Activated naive CD4-positive, alpha-beta T cell treated with anti-CD3 and anti-CD28 coated beads for 36 hours (primary cell): ENCODE measurements at regions of chr2 and their contacts with region 1.

Region 1: DNA sequence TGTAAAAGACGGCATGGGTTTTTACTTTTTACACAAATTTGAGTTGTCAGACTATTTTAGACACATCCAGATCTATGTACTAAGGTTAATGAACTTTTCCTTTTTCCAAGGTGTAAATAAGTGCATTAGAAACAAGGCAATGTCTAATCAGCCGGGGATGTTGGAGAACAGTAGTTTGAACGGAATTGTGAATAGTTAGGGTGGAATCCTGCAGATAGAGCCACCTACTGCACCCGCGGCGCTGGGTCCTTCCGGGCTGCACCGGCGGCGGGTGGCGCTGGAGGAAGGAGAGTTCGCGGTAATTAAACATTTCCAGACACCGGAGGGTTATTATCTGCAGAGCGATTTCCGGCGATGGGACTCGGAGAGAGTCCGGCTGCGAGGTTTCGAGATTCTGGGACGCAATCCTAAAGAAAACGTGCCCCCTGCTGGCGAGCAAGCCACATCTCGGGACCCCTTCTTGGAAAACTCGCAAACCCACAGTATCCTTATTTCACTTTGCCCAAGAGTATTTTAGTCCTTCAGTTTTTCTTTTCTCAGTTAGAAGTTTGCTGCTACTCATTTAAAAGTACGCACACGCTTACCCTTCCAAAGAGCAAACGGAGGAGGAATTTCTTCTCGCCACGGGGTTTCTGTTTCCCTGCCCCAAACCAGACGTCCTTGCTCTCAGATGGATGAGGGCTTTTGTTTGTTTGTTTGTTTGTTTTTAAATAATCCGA is 4.5 kb upstream of the OSR1 start:
- DNase-seq: peak; percentile 70
- H3K4me3 Mint-ChIP-seq: peak overlapping the region; percentile 92
- H3K27ac Mint-ChIP-seq: no peak overlapping the region
- H3K4me1 Mint-ChIP-seq: peaks cover 28% of the 10 kb centered on the region
- H3K27me3 Mint-ChIP-seq: peaks cover 56% of the 10 kb centered on the region

Region 2: DNA sequence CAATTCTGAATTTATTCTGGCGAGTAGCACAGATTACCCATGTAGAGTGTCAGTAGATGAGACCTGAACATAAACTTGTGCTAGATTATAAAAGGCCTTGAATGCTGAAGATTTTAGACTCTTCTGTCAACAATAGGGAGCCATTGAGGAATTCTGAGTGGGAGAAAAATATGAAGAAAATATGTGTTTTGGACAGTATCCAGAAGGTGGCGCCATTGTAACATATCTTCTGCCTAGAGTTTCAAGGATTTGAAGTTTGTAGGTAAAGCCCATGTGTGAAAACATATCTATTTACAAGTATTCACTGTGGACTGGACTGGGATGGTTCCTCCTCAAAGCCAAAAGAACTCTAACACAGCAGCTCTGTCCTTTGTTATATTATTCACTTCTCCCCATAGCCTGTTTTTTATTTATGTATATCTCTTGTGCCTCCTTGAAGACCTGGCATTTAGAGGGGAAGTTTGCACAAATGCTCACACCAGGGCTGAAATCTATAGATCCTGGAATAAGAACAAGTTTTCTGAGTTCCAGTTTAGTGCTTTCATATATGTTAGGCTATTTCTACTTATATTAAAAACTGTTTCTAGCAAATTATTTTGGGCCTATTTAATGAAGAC is 927.4 kb before region 1 on chr2:
- CTCF ChIA-PET with region 1: no interaction called
- intact Hi-C with region 1: loop called (anchors 2 kb)
- DNase-seq: peak; percentile 38
- H3K4me3 Mint-ChIP-seq: no peak overlapping the region
- H3K27ac Mint-ChIP-seq: no peak overlapping the region
- H3K4me1 Mint-ChIP-seq: no peaks in the 10 kb centered on the region
- H3K27me3 Mint-ChIP-seq: peaks cover 10% of the 10 kb centered on the region

Region 3: GRCh38 chr2:18560031-18560796 is 802.7 kb before region 1 on chr2 and contains the start of gene RDH14:
- CTCF ChIA-PET with region 1: no interaction called
- intact Hi-C with region 1: loop called (anchors 5 kb)
- DNase-seq: peak; percentile 94
- H3K4me3 Mint-ChIP-seq: peak within 1 kb of the TSS; percentile 84
- H3K27ac Mint-ChIP-seq: peak within 1 kb of the TSS; percentile 89
- H3K4me1 Mint-ChIP-seq: peaks cover 35% of the 10 kb centered on the region
- H3K27me3 Mint-ChIP-seq: no peaks in the 10 kb centered on the region
- total RNA-seq, gene RDH14: 11.4 to 11.6 TPM

Region 4: DNA sequence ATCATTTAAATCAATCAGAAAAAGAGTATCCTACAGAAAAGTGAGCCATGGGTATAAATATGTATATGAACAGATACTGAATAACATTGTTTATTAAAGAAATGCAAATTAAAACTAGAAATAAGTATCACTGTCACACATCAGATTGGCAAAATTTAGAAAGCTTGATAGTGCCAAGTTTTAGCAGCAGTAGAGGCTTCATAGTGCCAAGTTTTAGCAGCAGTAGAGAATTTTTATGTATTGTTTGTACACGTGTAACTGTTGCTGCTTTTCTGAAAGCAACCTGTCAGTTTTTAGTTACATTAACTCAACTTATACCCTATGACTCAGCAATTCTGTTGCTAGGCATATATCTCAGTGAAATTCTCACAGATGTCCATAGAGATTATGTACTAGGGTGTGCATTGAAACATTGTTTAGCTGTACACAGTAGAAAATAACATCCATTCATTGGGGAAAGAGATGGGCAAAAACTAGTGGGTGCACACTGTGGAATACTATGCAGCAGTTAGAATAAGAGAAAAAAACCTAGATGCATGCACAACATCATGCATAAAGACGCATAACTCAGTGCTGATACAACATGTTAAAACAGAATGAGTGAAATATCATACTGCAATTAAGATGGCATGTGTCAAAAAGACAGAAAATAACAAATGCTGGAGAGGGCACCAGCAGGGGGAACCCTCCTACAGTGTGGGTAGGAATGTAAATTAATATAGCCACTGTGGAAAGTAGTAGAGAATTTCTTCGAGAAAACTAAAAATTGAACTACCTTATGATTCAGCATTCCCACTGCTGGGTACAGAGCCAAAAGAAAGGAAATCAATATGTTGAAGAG is 479.1 kb before region 1 on chr2:
- CTCF ChIA-PET with region 1: no interaction called
- intact Hi-C with region 1: loop called (anchors 2 kb)
- DNase-seq: peak; percentile 22
- H3K4me3 Mint-ChIP-seq: no peak overlapping the region
- H3K27ac Mint-ChIP-seq: no peak overlapping the region
- H3K4me1 Mint-ChIP-seq: no peaks in the 10 kb centered on the region
- H3K27me3 Mint-ChIP-seq: no peaks in the 10 kb centered on the region

Region 5: DNA sequence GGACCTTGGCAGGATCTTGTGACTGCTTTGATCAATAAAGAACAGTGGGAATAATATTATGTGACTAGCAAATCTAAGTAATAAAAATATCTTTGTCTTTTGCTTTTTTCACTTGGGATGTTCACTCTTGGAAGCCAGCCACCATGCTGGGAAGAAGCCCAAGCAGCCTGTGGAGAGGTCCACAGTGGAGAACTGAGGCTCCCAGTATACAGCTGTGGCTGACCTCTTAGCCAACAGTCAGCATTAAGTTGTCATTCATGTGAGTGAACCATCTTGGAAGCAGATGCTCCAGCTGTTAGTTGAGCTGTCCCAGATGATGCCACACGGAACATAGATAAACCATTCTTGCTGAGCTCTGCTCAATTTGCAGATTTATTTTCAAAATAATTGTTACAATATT is 164.5 kb before region 1 on chr2:
- CTCF ChIA-PET with region 1: no interaction called
- intact Hi-C with region 1: no loop called
- DNase-seq: no peak
- H3K4me3 Mint-ChIP-seq: no peak overlapping the region
- H3K27ac Mint-ChIP-seq: no peak overlapping the region
- H3K4me1 Mint-ChIP-seq: no peaks in the 10 kb centered on the region
- H3K27me3 Mint-ChIP-seq: peaks cover 2% of the 10 kb centered on the region

Region 6: GRCh38 chr2:19488009-19488691 is 125.2 kb after region 1 on chr2:
- CTCF ChIA-PET with region 1: no interaction called
- intact Hi-C with region 1: loop called (anchors 5 kb)
- DNase-seq: peak; percentile 49
- H3K4me3 Mint-ChIP-seq: no peak overlapping the region
- H3K27ac Mint-ChIP-seq: no peak overlapping the region
- H3K4me1 Mint-ChIP-seq: peaks cover 7% of the 10 kb centered on the region
- H3K27me3 Mint-ChIP-seq: peaks cover 19% of the 10 kb centered on the region

Region 7: DNA sequence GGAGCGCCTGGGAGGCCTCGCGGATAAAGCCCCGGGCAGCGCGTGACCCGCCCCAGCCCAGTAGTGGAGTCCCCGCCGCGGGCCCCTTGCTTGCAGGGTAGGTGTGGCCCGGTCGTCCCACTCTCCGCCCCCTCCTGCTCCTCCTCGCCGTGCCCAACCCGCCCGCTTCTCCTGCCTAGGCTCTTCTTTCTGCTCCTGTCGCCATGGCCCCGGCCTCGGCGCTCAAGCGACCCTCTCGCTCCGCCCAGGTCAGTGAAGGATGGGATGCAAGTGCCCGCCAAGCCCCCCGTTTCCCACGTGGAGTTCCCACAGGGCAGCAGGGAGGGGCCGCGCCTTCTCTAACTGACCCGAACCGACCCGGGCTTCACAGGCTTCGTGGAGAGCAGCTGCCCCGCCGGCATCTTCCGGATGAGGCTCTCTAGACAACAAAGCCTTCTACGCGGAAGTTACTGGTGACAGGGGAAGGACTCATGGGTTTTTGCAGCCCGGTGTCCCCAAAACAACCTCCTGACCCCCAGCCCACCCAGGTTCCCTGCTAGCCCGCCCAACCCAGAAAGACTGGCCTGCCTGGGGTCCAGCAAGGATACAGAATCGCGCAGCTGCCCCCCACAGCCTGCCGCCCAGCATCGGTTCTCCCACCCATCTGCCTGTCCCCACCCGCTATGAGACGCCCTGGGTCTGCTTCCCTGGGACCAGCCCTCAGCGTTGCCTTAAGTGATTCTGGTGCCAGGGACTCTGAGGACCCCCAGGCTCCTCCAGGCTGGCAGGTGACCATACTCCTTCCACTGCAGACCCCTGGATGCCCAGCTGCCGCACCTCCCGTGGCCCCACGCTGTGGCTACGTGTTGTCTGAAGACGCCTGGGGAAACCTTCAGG is 506.0 kb after region 1 on chr2:
- CTCF ChIA-PET with region 1: interaction called, 3 read pairs
- intact Hi-C with region 1: loop called (anchors 5 kb)
- DNase-seq: peak; percentile 67
- H3K4me3 Mint-ChIP-seq: peak overlapping the region; percentile 83
- H3K27ac Mint-ChIP-seq: peak overlapping the region; percentile 47
- H3K4me1 Mint-ChIP-seq: peaks cover 22% of the 10 kb centered on the region
- H3K27me3 Mint-ChIP-seq: no peaks in the 10 kb centered on the region